SK-N-SH (cell line): ENCODE measurements at regions of chr14 and their contacts with region 1.

Region 1: GRCh38 chr14:90697577-90698206 is 118.5 kb downstream of the TTC7B start:
- DNase-seq: peak; percentile 80
- H3K4me3 ChIP-seq: peak overlapping the region in 1 of 2 experiments; percentile 48; a peak in 1 of 4 replicates
- H3K27ac ChIP-seq: peak overlapping the region in 1 of 2 experiments; percentile 65; a peak in 3 of 4 replicates
- H3K4me1 ChIP-seq: peaks cover 21 to 28% of the 10 kb centered on the region in 2 experiments; a peak in 3 of 4 replicates
- H3K27me3 ChIP-seq: no peaks in the 10 kb centered on the region
- CTCF ChIP-seq: peak; percentile 96
- EP300 ChIP-seq: no peak
- RAD21 ChIP-seq: peak; percentile 97

Region 2: GRCh38 chr14:90301668-90302090 is 396.0 kb before region 1 on chr14:
- CTCF ChIA-PET with region 1: interaction called, 30 read pairs
- POLR2A ChIA-PET with region 1: no interaction called
- DNase-seq: peak; percentile 51
- H3K4me3 ChIP-seq: no peak overlapping the region
- H3K27ac ChIP-seq: peak overlapping the region in 1 of 2 experiments; percentile 47; a peak in 1 of 4 replicates
- H3K4me1 ChIP-seq: no peaks in the 10 kb centered on the region; a peak in 1 of 4 replicates
- H3K27me3 ChIP-seq: no peaks in the 10 kb centered on the region
- CTCF ChIP-seq: peak; percentile 67
- EP300 ChIP-seq: no peak
- RAD21 ChIP-seq: peak; percentile 88

Region 3: DNA sequence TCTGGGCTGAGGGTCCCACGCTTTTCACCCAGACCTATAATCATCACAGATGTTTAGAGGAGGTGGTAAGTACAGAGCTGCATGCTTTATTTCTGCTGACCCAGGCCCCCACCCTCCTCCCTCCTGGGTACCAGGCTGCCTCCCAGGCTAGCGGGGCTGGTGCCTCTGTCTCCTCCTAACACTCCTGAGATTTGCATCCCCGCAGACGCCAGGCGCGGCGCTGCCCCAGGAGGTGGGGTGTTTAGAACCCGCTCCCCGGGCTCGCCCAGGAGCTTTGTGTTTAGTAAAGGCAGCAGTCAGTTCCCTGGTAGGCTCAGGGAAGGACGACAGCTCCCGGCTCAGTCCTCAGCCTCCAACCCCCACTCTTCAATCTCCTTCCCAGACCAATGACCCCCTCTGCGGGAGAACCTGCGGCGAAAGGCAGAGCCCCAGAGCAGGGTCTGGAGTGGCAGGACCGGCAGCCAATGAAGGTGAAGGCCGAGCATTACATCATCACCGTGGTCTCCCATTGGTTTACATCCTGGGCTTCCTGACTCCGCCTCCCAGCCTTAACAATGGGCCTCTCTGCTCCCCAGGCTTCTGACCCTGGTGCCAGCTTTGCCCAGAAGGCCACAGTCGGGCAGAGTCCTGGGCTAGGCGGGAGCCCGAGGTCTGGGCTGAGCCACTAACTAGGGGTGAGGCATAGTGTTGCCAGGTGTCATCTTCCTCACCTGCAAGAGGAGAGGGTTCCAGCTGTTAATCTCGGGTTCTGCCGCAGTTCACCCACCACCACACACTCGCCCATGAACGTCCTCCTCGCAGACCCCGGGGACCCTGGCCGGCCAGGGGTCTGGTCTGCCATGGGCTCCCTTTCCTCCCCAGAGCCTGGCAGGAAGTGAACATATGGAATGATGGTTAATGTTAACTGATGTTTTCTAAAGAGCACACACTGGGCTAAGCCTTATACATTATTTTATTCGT is 243.4 kb before region 1 on chr14:
- CTCF ChIA-PET with region 1: interaction called, 24 read pairs
- POLR2A ChIA-PET with region 1: interaction called, 25 read pairs
- DNase-seq: peak; percentile 95
- H3K4me3 ChIP-seq: peak overlapping the region; percentile 51 to 57; a peak in 3 of 4 replicates
- H3K27ac ChIP-seq: peak overlapping the region; percentile 24 to 98; a peak in 3 of 4 replicates
- H3K4me1 ChIP-seq: peaks cover 0 to 72% of the 10 kb centered on the region in 2 experiments; a peak in 2 of 4 replicates
- H3K27me3 ChIP-seq: no peaks in the 10 kb centered on the region
- CTCF ChIP-seq: no peak
- EP300 ChIP-seq: 0 out of 4 replicates have a peak, but pooled peaks of 1 of the 2 experiments have one; percentile 57
- RAD21 ChIP-seq: peak; percentile 37; the same call in 1 of the 2 replicates

Region 4: GRCh38 chr14:90615517-90616060 is 82.1 kb before region 1 on chr14:
- CTCF ChIA-PET with region 1: interaction called, 14 read pairs
- POLR2A ChIA-PET with region 1: no interaction called
- DNase-seq: peak; percentile 83
- H3K4me3 ChIP-seq: no peak overlapping the region
- H3K27ac ChIP-seq: peak overlapping the region in 1 of 2 experiments; percentile 94; a peak in 2 of 4 replicates
- H3K4me1 ChIP-seq: peaks cover 7 to 34% of the 10 kb centered on the region in 2 experiments; a peak in 3 of 4 replicates
- H3K27me3 ChIP-seq: no peaks in the 10 kb centered on the region
- CTCF ChIP-seq: no peak
- EP300 ChIP-seq: peak in 1 of 2 experiments; percentile 47; a peak in 1 of 4 replicates
- RAD21 ChIP-seq: no peak

Region 5: DNA sequence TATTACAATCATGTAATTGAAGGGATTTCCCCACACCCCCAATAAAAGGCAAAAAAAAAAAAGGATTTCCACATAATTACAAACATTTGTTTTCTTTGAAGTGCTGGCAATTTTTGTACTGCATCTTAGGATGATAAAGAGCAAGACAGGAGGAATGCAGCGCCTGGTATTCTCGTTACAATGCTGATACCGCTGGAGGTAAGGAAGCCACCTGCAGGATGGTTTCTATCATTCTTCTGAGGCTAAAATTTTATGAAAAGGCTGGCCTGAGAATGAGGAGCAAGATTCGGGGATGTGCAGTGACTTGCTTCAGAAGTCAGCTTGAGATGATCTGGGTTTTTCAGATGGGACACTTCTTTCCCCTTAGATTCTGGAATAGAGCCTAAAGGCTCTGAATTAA is 16.3 kb before region 1 on chr14:
- CTCF ChIA-PET with region 1: interaction called, 11 read pairs
- POLR2A ChIA-PET with region 1: no interaction called
- DNase-seq: no peak
- H3K4me3 ChIP-seq: no peak overlapping the region
- H3K27ac ChIP-seq: no peak overlapping the region; a peak in 1 of 4 replicates
- H3K4me1 ChIP-seq: peaks cover 20 to 23% of the 10 kb centered on the region in 2 experiments
- H3K27me3 ChIP-seq: no peaks in the 10 kb centered on the region
- CTCF ChIP-seq: no peak
- EP300 ChIP-seq: no peak
- RAD21 ChIP-seq: no peak

Region 6: GRCh38 chr14:90721619-90722305 is 24.1 kb after region 1 on chr14:
- CTCF ChIA-PET with region 1: interaction called, 38 read pairs
- POLR2A ChIA-PET with region 1: interaction called, 4 read pairs
- DNase-seq: no peak
- H3K4me3 ChIP-seq: no peak overlapping the region
- H3K27ac ChIP-seq: peak overlapping the region in 1 of 2 experiments; percentile 34; a peak in 1 of 4 replicates
- H3K4me1 ChIP-seq: peaks cover 3 to 7% of the 10 kb centered on the region in 2 experiments; a peak in 2 of 4 replicates
- H3K27me3 ChIP-seq: no peaks in the 10 kb centered on the region
- CTCF ChIP-seq: no peak
- EP300 ChIP-seq: no peak
- RAD21 ChIP-seq: no peak